Caco-2 (cell line): ENCODE measurements at regions of chr20 and their contacts with region 1.

Region 1: GRCh38 chr20:50356261-50357025 is 153.7 kb upstream of the PTPN1 start:
- DNase-seq: no peak
- H3K4me3 ChIP-seq: no peak overlapping the region
- H3K4me3 Mint-ChIP-seq: no peak overlapping the region
- H3K27ac Mint-ChIP-seq: no peak overlapping the region
- H3K4me1 ChIP-seq: peaks cover 41% of the 10 kb centered on the region
- H3K4me1 Mint-ChIP-seq: peaks cover 37% of the 10 kb centered on the region
- H3K27me3 ChIP-seq: no peaks in the 10 kb centered on the region
- H3K27me3 Mint-ChIP-seq: no peaks in the 10 kb centered on the region
- CTCF ChIP-seq: no peak

Region 2: GRCh38 chr20:49635166-49635565 is 721.3 kb before region 1 on chr20:
- CTCF ChIA-PET with region 1: no interaction called
- POLR2A ChIA-PET with region 1: no interaction called
- intact Hi-C with region 1: no loop called
- DNase-seq: no peak
- H3K4me3 ChIP-seq: no peak overlapping the region
- H3K4me3 Mint-ChIP-seq: no peak overlapping the region
- H3K27ac Mint-ChIP-seq: no peak overlapping the region
- H3K4me1 ChIP-seq: no peaks in the 10 kb centered on the region
- H3K4me1 Mint-ChIP-seq: peaks cover 8% of the 10 kb centered on the region
- H3K27me3 ChIP-seq: no peaks in the 10 kb centered on the region
- H3K27me3 Mint-ChIP-seq: no peaks in the 10 kb centered on the region
- CTCF ChIP-seq: no peak

Region 3: DNA sequence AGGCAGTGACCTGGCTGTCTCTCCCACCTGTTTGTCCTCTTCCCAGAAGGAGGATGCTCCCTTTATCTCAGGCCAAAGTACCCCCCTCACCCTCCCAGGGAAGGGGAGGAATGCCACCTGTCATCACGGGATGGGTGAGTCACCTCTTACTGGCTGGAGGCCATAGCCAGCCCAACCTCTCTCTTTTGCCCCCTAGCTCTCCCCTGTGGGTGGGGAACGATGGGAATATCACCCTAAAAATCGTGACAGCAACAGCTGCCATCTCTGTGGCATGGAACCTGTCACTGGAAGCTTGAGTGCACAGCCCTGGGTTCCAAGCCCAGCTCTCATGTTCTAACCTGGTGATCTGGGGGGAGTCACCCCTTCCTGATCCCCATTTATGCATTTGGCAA is 16.3 kb after region 1 on chr20:
- CTCF ChIA-PET with region 1: no interaction called
- POLR2A ChIA-PET with region 1: no interaction called
- intact Hi-C with region 1: loop called (anchors 2 kb)
- DNase-seq: peak; percentile 70 to 90
- H3K4me3 ChIP-seq: no peak overlapping the region
- H3K4me3 Mint-ChIP-seq: no peak overlapping the region
- H3K27ac Mint-ChIP-seq: peak overlapping the region; percentile 31
- H3K4me1 ChIP-seq: peaks cover 41% of the 10 kb centered on the region
- H3K4me1 Mint-ChIP-seq: peaks cover 43% of the 10 kb centered on the region
- H3K27me3 ChIP-seq: no peaks in the 10 kb centered on the region
- H3K27me3 Mint-ChIP-seq: no peaks in the 10 kb centered on the region
- CTCF ChIP-seq: no peak

Region 4: GRCh38 chr20:50450881-50451752 is 94.7 kb after region 1 on chr20:
- CTCF ChIA-PET with region 1: no interaction called
- POLR2A ChIA-PET with region 1: no interaction called
- intact Hi-C with region 1: no loop called
- DNase-seq: peak; percentile 80 to 89
- H3K4me3 ChIP-seq: no peak overlapping the region
- H3K4me3 Mint-ChIP-seq: peak overlapping the region; percentile 62
- H3K27ac Mint-ChIP-seq: peak overlapping the region; percentile 85
- H3K4me1 ChIP-seq: peaks cover 75% of the 10 kb centered on the region
- H3K4me1 Mint-ChIP-seq: peaks cover 75% of the 10 kb centered on the region
- H3K27me3 ChIP-seq: no peaks in the 10 kb centered on the region
- H3K27me3 Mint-ChIP-seq: no peaks in the 10 kb centered on the region
- CTCF ChIP-seq: no peak